GM18951 (cell line): ENCODE measurements at regions of chr9 and their contacts with region 1.

Region 1: GRCh38 chr9:136485049-136486045 is 2.5 kb upstream of the SEC16A start:
- POLR2A ChIP-seq: no peak

Region 2: GRCh38 chr9:136629752-136630661 is 144.7 kb after region 1 on chr9:
- in situ Hi-C with region 1: loop called (anchors 5 kb)
- POLR2A ChIP-seq: no peak